ENCODE measurements at regions of chr1 and their contacts with region 1.

Region 1: DNA sequence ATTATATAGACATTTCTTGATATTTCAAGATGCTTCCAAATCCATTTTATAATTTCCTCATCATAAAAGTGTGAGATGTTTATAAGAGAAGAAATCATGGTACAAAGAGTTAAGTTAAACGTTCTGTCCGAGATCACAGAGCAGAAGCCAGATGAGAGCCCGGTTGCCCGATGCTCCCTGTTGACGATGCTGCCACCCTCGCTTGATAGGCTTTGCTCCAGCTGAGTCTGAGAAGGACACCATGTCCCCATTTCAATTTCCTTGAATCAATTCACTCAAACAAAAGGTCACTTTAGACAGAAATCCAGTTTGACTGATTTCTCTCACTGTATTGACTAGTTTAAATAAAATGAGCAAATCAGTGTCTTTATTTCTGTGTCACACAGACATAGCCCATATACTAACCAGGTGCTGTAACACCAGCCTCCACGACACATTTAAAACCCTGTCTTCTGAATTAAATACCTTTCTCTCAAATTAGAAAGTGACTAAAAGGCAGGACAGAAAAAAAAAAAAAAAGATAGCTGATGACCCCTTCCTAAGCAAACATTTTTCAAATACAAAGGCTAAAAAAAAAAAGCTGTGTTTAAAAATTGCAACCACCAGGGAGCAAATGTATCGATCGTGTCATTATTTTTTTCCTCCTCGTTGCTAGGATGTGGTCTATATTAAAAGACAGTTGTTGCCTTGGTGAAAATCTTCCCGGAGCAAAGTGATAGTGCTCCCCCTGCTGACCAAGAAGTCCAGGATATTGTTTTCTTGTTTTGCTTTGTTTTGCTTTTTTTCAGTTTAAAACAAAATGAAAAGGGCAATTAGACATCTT is 35.2 kb downstream of the DNASE2B start:
- DNase-seq: peak; percentile 69
- H3K4me3 ChIP-seq: peak overlapping the region in 3 of 4 donors; percentile 1 to 42 (median 24)
- H3K27ac ChIP-seq: peak overlapping the region; percentile 39 to 79 (median 58)
- H3K4me1 ChIP-seq: peaks cover 0 to 29% (median 6%) of the 10 kb centered on the region in 4 donors
- H3K27me3 ChIP-seq: no peaks in the 10 kb centered on the region
- CTCF ChIP-seq: peak; percentile 66 to 96 (median 79)
- EP300 ChIP-seq: no peak
- POLR2A ChIP-seq: no peak

Region 2: DNA sequence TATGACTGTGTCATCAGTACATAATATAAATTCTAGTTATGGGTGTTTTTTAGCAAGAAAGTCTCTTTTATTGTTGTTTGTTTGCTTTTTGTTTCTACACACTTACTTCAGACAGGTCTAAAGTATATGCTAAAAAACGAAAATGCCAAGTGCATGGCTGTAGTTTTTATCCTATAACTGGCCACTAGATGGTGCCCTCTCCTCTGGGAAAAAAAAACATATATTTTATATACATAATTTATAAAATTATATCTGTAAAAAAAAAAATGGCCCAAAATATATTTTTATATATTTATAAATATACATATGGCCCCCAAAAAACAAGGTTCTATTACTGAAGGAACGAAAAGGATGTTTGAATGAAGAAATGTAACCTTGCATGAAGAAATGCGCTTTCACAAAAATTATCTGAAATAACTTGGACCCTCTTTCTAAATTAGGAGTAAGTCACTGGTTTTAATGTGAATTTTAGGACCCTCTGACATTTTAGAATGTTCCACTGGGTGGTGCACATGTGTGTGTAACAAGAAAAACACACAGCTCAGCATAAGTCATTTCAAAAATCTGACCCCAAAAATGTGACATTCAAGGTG is 528.1 kb before region 1 on chr1:
- in situ Hi-C with region 1: loop called in 1 of 4 experiments (anchors 25 kb)
- intact Hi-C with region 1: no loop called
- DNase-seq: no peak
- H3K4me3 ChIP-seq: no peak overlapping the region
- H3K27ac ChIP-seq: no peak overlapping the region
- H3K4me1 ChIP-seq: peaks cover 0 to 15% (median 0%) of the 10 kb centered on the region in 4 donors
- H3K27me3 ChIP-seq: no peaks in the 10 kb centered on the region
- CTCF ChIP-seq: peak; percentile 45 to 75 (median 64)
- EP300 ChIP-seq: no peak
- POLR2A ChIP-seq: no peak

Region 3: GRCh38 chr1:84027368-84027767 is 406.1 kb before region 1 on chr1:
- in situ Hi-C with region 1: no loop called
- intact Hi-C with region 1: no loop called
- DNase-seq: no peak
- H3K4me3 ChIP-seq: no peak overlapping the region
- H3K27ac ChIP-seq: no peak overlapping the region
- H3K4me1 ChIP-seq: peaks cover 0 to 5% (median 0%) of the 10 kb centered on the region in 4 donors
- H3K27me3 ChIP-seq: no peaks in the 10 kb centered on the region
- CTCF ChIP-seq: no peak
- EP300 ChIP-seq: no peak
- POLR2A ChIP-seq: no peak

Region 4: DNA sequence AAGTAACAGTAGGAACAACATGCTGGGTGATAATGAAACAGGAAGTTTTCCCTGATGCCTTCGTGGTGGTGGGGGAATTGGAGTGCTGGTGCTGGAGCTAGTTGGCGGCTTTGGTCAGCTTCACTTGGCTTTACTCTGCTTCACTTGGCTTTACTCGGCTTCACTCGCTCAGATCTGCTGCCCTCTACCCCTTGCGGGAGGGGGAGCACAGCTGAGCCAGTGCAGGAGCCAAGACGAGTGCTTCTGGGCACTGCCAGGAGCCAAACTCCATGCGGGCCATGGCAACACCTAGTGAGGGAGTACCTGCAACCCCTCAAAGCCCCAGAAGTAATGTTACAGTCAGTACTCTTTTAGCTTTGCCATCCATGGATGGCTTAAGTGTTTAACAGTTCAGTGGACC is 300.0 kb before region 1 on chr1:
- in situ Hi-C with region 1: loop called in 2 of 4 experiments (anchors 10 kb)
- intact Hi-C with region 1: no loop called
- DNase-seq: no peak
- H3K4me3 ChIP-seq: no peak overlapping the region
- H3K27ac ChIP-seq: no peak overlapping the region
- H3K4me1 ChIP-seq: no peaks in the 10 kb centered on the region
- H3K27me3 ChIP-seq: no peaks in the 10 kb centered on the region
- CTCF ChIP-seq: no peak
- EP300 ChIP-seq: no peak
- POLR2A ChIP-seq: no peak

Region 5: GRCh38 chr1:84301004-84301784 is 132.3 kb before region 1 on chr1 and contains the start of gene SAMD13:
- in situ Hi-C with region 1: loop called in 1 of 4 experiments (anchors 10 kb)
- intact Hi-C with region 1: no loop called
- DNase-seq: peak; percentile 90
- H3K4me3 ChIP-seq: peak within 1 kb of the TSS in 3 of 4 donors; percentile 30 to 48 (median 35)
- H3K27ac ChIP-seq: peak within 1 kb of the TSS; percentile 87 to 94 (median 92)
- H3K4me1 ChIP-seq: peaks cover 6 to 60% (median 16%) of the 10 kb centered on the region in 4 donors
- H3K27me3 ChIP-seq: no peaks in the 10 kb centered on the region
- CTCF ChIP-seq: no peak
- EP300 ChIP-seq: peak; percentile 33
- POLR2A ChIP-seq: no peak
- total RNA-seq, gene SAMD13: 2.2 to 17.8 (median 13.9) TPM

Region 6: DNA sequence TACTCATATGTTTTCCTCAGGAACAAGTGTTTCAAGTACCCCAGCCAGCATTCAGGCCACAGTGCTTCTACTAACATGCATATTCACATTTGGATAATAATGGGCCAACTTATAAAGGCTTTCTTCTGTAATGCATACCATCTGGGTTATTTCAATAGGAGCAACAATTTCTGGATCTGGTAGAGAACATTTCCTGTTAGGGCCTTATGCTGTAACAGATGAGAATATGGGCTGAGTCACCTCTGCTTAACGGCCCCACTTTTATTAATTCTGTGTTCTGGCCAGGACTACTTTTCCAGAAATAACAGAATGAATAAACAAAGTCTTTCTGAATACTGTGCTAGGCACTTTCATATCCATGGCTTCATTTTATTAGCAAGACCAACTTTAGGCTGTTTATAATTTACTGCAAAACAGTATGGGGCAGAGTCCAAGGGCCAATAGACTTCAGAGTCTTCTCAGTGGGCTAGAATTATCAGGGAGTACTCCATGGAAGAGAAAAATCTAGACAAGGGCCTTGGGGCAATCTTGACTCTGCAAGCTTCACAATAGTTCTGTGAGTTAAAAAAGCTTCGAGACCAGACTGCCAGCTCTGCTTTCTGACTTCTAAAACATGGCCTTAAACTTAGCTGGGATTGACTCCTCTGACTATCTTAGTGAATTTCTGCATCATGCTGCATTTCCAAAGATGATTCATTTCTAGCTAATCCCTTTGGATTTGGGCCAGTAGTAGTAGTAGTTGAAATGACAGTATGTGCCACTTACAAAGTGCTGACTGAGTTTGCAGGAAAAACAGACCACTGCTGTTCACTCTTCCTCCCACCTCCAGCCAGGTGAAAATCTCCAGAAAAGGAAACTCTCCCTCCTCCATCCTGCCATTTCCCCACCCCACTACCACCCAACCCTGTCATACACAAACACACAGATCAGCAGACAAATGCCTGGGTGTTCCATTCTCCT is 265.0 kb after region 1 on chr1:
- in situ Hi-C with region 1: no loop called
- intact Hi-C with region 1: no loop called
- DNase-seq: no peak
- H3K4me3 ChIP-seq: no peak overlapping the region
- H3K27ac ChIP-seq: peak overlapping the region; percentile 74 to 81 (median 78)
- H3K4me1 ChIP-seq: peaks cover 13 to 43% (median 15%) of the 10 kb centered on the region in 4 donors
- H3K27me3 ChIP-seq: no peaks in the 10 kb centered on the region
- CTCF ChIP-seq: no peak
- EP300 ChIP-seq: peak; percentile 48
- POLR2A ChIP-seq: no peak

Region 7: GRCh38 chr1:84753516-84754385 is 320.3 kb after region 1 on chr1:
- in situ Hi-C with region 1: loop called in 1 of 4 experiments (anchors 10 kb)
- intact Hi-C with region 1: loop called (anchors 10 kb)
- DNase-seq: peak; percentile 76
- H3K4me3 ChIP-seq: no peak overlapping the region
- H3K27ac ChIP-seq: no peak overlapping the region
- H3K4me1 ChIP-seq: no peaks in the 10 kb centered on the region
- H3K27me3 ChIP-seq: no peaks in the 10 kb centered on the region
- CTCF ChIP-seq: peak; percentile 91 to 96 (median 95)
- EP300 ChIP-seq: no peak
- POLR2A ChIP-seq: no peak

Region 8: GRCh38 chr1:84944767-84945486 is 511.5 kb after region 1 on chr1:
- in situ Hi-C with region 1: loop called in 3 of 4 experiments (anchors 25 kb)
- intact Hi-C with region 1: no loop called
- DNase-seq: peak; percentile 67
- H3K4me3 ChIP-seq: peak overlapping the region; percentile 8 to 44 (median 22)
- H3K27ac ChIP-seq: peak overlapping the region; percentile 68 to 82 (median 72)
- H3K4me1 ChIP-seq: peaks cover 0 to 9% (median 3%) of the 10 kb centered on the region in 4 donors
- H3K27me3 ChIP-seq: no peaks in the 10 kb centered on the region
- CTCF ChIP-seq: peak; percentile 88 to 97 (median 96)
- EP300 ChIP-seq: no peak
- POLR2A ChIP-seq: no peak